Posterior cingulate gyrus (tissue), 11 donors: ENCODE measurements at regions of chr11 and their contacts with region 1.

Region 1: DNA sequence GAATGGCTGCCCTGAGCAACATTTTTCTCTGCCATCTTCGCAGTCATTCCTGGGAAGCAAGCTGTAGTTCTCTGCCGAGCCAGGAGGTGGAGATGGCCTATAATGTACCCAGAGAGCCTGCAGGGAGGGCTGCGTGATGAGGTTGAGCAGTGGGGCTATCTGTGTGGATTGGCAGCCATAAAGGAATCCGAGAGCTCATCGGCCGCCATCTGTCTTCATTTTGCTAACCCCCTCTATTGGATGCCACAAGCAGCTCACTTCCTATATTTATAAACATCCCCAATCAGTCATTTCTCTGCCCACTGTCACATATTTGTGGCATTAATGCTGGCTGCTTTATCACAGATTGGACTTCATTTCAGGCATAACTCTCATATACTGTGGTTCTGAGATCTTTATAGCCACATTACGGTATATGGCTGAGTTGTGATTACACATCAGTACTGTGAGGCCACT is 209.5 kb downstream of the NTM start:
- DNase-seq: peak in 2 of 10 donors; percentile 40 to 90

Region 2: DNA sequence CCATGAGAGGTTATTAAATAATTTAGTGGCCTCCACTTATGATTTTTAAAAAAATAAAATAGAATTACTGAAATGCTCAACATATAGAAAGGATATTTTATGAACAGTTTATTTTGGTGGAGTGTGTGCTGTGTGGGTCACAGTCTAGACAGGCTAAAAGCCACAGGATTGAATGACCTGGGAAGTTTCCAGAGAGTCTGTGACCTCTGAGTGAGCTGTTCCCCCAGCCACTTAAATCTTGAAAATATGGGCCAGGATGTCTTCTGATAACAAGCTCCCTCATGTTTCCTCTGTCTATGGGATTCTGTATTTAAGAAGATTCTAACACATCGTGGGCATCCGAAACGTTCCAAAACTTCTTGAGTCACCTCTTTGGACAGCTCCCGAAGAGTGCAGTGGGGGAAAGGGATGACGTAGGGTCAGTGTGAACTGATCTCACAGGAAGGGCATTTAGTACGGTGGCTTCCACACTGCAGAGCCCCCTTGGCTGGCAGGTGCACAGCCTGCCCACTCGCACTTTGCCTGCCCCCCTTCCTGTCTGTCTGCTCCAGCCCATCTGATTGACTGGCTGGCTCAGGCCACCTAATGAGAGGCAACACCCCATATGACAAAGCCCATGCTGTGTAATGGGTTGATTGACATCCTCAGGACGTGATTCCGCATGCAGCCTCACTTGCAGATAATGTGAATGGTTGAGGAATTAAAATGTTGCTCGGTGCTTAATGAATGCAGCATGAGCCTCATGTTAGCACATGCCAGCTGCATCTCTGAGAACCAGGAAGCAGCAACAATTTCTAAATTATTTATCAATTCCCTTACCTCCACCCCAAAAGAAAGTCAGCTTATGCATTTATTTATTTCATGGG is 112.1 kb before region 1 on chr11:
- intact Hi-C with region 1: no loop called
- DNase-seq: peak in 1 of 10 donors; percentile 55

Region 3: DNA sequence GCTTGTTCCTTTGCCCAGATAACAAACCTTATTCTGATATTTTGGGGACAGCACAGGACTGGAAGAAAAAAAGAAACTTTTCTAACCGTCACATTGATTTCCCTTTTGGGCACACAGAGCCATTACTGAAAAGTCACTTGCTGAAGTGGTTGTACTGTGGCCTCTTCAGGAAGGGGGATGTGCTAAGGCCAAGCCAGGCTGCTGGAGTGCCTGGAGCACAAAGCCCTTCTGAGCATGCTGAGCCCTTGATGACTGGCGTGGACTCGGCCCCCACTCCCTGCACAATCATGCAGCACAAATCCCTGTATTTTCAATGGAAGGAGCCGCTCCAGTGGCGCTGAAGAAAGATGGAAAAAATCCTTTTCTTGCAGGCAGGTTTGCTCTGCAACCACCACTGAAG is 45.3 kb before region 1 on chr11:
- intact Hi-C with region 1: loop called (anchors 5 kb)
- DNase-seq: peak in 9 of 10 donors; percentile 38 to 93 (median 62)

Region 4: DNA sequence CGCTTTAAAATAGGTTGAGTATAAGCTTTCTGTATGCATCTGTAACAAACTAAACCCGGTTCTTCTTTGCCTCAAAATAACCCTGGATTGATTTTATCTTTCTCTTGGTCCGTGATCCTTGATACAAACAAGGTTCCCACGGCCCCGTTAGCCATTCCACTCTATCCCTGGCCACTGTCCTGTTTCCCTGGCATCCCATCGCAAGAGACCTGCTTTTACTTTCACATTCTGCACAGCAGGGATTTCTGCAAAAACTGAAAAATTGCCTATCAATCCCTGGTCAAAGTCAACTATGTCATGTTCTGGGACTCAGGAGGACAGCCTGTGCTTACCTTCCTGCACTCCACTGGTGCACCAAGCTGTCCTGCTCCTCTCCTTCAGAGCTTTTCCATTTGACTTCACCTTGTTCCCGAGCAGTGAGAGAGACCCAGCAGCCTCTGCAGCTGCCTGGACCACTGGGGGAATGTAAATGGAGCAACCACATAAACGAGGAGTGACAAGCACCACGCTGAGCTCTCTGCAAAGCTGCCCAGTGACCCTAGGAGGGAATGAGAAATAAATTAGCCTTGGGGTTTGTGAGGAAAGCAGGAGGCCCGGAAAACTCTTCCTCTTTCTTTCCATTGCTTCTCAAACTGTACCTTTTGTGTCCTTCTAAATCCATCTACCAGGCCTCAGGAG is 33.6 kb before region 1 on chr11:
- intact Hi-C with region 1: loop called (anchors 5 kb)
- DNase-seq: no peak

Region 5: DNA sequence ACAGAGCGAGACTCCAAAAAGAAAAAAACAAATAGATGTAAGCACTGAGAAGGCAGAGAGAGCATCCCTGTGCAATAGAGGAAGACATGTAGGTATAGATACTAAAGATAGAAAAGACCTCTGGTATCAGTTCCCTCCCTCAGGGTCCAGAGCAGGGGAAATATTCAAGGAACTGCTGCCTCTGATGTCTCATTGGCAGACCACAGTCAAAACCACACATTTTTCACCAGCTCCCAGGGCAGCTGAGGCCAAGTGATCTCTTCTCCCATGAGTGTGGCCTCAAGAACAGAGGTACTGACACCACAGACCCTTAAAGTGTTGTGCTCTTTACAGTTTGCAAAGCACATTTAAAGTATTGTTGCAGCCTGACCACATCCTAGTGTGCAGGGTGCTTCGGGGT is 79.0 kb after region 1 on chr11:
- intact Hi-C with region 1: no loop called
- DNase-seq: no peak